H1 (cell line): ENCODE measurements at regions of chr5 and their contacts with region 1.

Region 1: GRCh38 chr5:137580030-137580429 is 80.9 kb upstream of the SPOCK1 start:
- DNase-seq: peak in 1 of 2 experiments; percentile 44
- H3K4me3 ChIP-seq: no peak overlapping the region
- H3K27ac ChIP-seq: no peak overlapping the region
- H3K4me1 ChIP-seq: no peaks in the 10 kb centered on the region
- H3K27me3 ChIP-seq: no peaks in the 10 kb centered on the region
- CTCF ChIP-seq: peak; percentile 39 to 53 (median 50)
- EP300 ChIP-seq: no peak
- POLR2A ChIP-seq: no peak
- RAD21 ChIP-seq: peak; percentile 32 to 36; a peak in 3 of 4 replicates

Region 2: GRCh38 chr5:137600721-137601360 is 20.8 kb after region 1 on chr5:
- CTCF ChIA-PET with region 1: interaction called, 11 read pairs
- POLR2A ChIA-PET with region 1: no interaction called
- DNase-seq: no peak
- H3K4me3 ChIP-seq: no peak overlapping the region
- H3K27ac ChIP-seq: no peak overlapping the region
- H3K4me1 ChIP-seq: peaks cover 0 to 4% (median 0%) of the 10 kb centered on the region in 4 experiments; a peak in 2 of 7 replicates
- H3K27me3 ChIP-seq: no peaks in the 10 kb centered on the region
- CTCF ChIP-seq: no peak
- EP300 ChIP-seq: no peak
- POLR2A ChIP-seq: no peak
- RAD21 ChIP-seq: no peak